BJ (cell line): ENCODE measurements at regions of chr17 and their contacts with region 1.

Region 1: GRCh38 chr17:48457080-48457836 is 27.2 kb upstream of the SKAP1 start:
- DNase-seq: no peak
- H3K4me3 ChIP-seq: no peak overlapping the region
- H3K27me3 ChIP-seq: peaks cover 14% of the 10 kb centered on the region
- CTCF ChIP-seq: peak; percentile 98

Region 2: GRCh38 chr17:48441231-48441711 is 16.0 kb before region 1 on chr17:
- CTCF ChIA-PET with region 1: interaction called, 16 read pairs
- POLR2A ChIA-PET with region 1: no interaction called
- DNase-seq: no peak
- H3K4me3 ChIP-seq: no peak overlapping the region
- H3K27me3 ChIP-seq: peaks cover 4% of the 10 kb centered on the region
- CTCF ChIP-seq: no peak